Activated CD4-positive, alpha-beta memory T cell treated with anti-CD3 and anti-CD28 coated beads for 36 hours (primary cell): ENCODE measurements at regions of chr21 and their contacts with region 1.

Region 1: DNA sequence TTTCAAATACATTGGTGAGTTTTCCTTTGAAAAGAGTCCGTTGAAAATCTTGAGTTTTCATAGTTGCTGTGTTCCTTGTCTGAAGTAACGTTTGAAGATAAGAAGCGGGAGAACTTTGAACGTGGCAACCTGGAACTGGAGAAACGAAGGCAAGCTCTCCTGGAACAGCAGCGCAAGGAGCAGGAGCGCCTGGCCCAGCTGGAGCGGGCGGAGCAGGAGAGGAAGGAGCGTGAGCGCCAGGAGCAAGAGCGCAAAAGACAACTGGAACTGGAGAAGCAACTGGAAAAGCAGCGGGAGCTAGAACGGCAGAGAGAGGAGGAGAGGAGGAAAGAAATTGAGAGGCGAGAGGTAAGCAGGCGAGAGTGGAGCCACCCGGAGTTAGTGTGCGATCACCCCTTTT is 129.7 kb downstream of the ITSN1 start:
- DNase-seq: no peak
- H3K4me3 Mint-ChIP-seq: no peak overlapping the region
- H3K27ac Mint-ChIP-seq: no peak overlapping the region
- H3K4me1 Mint-ChIP-seq: no peaks in the 10 kb centered on the region
- H3K27me3 Mint-ChIP-seq: no peaks in the 10 kb centered on the region

Region 2: DNA sequence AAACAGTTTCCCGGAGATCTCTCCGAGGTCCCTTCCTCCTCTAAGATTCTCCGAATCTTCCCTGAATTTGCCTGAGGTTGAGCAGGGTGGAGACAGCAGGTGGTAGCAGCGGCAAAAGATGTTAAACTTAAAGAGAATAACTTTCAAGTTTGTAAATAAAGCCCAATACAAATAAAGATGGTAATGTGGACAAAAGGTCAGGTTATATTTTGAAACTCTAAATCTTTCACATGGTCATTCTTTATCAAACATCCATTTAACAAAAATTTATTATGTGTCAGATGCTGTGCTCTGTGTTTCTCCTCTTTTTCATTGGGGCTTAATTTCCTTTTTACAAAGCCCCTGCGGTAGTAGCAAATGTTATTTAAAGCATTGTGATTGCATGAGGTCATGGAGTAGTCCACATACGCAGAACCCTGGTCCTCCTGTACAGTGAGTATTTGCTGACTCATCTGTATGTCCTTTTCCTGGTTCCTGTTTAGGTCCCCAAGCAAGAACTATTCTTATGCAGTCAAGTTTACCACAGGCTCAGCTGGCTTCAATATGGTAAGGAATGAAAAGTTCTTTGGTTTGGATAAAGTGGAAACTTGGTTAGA is 10.4 kb before region 1 on chr21:
- CTCF ChIA-PET with region 1: no interaction called
- POLR2A ChIA-PET with region 1: no interaction called
- intact Hi-C with region 1: loop called (anchors 1 kb)
- DNase-seq: no peak
- H3K4me3 Mint-ChIP-seq: no peak overlapping the region
- H3K27ac Mint-ChIP-seq: no peak overlapping the region
- H3K4me1 Mint-ChIP-seq: no peaks in the 10 kb centered on the region
- H3K27me3 Mint-ChIP-seq: no peaks in the 10 kb centered on the region

Region 3: DNA sequence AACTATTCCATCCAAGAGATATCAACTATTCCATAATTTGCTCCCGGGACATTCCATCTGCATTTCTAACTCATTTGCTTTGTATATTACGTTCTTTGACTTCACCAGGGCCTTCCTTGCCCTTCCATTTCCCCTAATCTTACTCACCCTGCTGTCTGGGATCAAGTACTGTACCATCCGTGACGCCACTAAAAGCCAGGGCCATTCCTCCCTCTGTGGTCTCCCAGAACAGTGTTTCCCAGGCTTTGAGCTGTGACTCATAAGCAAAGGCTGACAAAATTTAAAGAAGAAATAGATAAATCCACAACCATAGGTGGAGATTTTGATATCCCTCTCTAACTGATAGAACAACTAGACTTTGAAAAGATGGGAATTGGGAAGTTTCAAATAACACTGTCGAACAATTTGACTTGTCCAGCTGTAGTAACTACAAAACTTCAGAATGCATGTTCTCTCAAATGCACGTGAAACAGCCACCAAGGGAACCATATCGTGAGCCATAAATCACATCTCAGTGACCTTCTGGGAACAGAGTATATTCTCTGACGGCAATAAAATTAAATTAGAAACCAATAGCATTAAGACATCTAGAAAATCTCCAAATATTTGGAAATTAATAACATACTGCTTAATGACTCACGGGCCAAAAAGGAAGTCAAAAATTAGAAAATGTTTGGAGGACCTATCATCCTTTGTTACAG is 1787.3 kb after region 1 on chr21:
- CTCF ChIA-PET with region 1: no interaction called
- POLR2A ChIA-PET with region 1: no interaction called
- intact Hi-C with region 1: no loop called
- DNase-seq: no peak
- H3K4me3 Mint-ChIP-seq: no peak overlapping the region
- H3K27ac Mint-ChIP-seq: no peak overlapping the region
- H3K4me1 Mint-ChIP-seq: no peaks in the 10 kb centered on the region
- H3K27me3 Mint-ChIP-seq: peaks cover 14% of the 10 kb centered on the region